ENCODE measurements at regions of chr15 and their contacts with region 1.

Region 1: DNA sequence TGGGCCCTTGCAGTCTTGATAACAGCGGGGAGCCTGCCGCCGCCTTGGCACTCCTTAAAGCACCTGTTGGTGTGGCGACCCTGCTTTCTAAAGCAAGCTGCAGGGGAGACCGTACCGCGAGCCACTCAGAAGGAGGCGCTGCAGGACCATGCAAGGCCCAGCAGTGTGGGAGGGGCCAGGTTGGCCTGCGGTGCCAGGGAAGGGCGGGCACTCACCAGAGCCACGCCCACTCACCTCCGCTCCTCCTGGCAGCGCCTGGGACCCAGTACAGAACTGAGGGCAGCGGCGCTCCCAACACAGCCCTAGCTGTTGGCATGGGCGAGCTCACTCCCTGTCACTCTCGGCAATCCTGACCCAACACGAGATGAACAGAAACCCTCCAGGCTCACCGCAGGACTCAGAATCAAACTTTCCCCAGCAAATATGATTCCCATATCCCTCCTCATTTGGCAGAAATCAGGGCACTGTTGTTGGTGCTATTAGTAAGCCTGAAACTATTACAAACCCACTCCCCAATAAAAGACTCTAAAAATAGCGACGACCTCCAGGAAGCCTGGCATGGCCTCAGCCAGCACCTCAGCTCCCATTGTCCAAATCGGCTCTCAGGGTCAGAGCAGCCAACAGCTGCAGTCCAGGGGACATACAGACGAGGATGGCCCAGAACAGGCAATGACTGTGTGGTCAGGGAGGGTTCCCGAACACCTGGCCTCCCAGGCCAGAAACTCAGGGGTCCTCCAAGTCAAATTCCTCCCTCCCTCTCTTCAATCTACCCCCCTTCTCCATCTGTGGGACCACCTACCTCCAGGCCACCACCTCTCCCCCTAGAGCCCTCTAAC is 77.2 kb downstream of the TBC1D2B start:
- DNase-seq: peak; percentile 60 to 83
- ATAC-seq: peak; percentile 3 to 15
- H3K4me3 ChIP-seq: no peak overlapping the region
- H3K27ac ChIP-seq: no peak overlapping the region
- H3K4me1 ChIP-seq: peaks cover 38 to 42% of the 10 kb centered on the region in 2 donors
- H3K27me3 ChIP-seq: no peaks in the 10 kb centered on the region
- CTCF ChIP-seq: peak; percentile 69 to 89 (median 77)
- POLR2A ChIP-seq: no peak

Region 2: DNA sequence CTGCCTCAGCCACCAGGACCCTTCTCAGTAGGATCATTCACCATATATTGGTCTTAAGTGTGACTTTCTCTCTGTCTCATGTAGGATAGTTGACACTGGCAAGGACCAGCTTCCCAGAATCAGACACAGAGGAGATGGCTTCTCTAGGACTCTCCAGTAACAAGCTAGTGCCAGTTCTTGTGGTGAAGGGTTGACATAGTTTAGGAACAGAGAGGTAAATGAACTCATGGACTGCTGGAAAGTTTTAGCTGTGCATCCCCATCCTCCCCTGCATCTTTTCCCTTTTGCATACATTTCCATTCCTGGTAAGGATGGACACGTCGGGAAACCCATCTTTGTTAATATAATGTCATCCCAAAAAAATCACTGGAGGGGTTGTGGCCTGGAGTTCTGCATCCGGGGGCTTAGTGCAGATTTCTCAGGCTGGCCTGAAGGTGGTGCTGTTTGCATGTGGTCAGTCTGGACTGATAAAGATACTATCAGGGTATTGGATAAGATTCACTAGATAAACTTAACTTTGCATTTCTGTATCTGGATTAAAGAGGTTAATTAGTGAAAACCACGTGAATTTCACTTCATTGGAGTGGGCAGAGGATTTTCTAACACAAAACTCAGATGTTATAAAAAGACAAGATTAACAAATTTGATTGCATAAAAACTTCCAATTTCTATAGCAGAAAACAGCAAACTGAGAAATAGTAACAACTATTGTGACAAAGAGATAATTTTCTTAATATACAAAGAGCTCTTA is 33.6 kb before region 1 on chr15:
- in situ Hi-C with region 1: no loop called
- intact Hi-C with region 1: loop called (anchors 5 kb)
- DNase-seq: no peak
- ATAC-seq: peak; percentile 80 to 88
- H3K4me3 ChIP-seq: no peak overlapping the region
- H3K27ac ChIP-seq: no peak overlapping the region
- H3K4me1 ChIP-seq: peaks cover 0 to 6% of the 10 kb centered on the region in 2 donors
- H3K27me3 ChIP-seq: no peaks in the 10 kb centered on the region
- CTCF ChIP-seq: peak; percentile 72 to 90 (median 80)
- POLR2A ChIP-seq: no peak

Region 3: DNA sequence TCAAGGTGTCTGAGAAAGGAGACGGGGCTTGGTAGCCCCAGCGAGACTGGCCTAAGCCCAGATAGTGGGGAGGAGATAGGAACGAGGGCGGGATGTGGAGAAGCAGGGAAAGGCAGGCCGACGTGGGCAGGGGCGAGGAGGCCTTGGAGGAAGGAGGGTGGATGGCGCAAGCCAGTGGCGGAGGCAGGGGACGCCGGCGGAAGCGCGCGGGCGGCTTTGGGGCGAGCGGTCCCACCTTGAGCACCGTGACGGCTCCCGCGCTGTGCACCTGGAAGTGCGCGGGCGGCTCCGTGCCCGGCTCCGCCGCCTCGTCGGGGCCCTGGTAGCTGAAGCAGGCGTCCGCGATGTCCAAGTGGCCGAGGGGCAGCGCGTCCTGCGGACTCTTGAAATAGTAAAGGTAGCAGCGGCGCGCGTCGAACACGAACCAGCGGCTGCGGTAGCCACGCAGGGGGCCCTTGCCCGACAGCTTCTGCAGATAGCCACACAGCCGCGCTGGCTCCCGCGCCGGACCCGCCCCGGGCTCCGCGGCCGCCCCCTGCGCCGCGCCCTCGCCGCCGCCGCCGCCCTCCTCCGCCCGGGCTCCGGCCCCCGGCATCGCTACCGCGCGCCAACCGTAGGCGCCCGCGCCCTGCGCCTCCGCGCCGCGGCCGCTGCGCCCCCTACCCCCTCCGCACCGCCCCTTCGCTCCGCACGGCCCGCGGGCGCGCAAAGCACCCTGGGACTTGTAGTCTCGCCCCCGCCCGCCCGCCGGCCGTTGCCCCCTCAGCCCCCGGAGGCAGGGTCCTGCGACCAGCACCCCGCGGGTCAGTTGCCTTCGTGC is 77.0 kb after region 1 on chr15 and contains the start of gene TBC1D2B:
- in situ Hi-C with region 1: loop called in 1 of 4 experiments (anchors 10 kb)
- intact Hi-C with region 1: loop called (anchors 2 kb)
- DNase-seq: peak; percentile 41 to 44
- ATAC-seq: peak; percentile 75 to 79
- H3K4me3 ChIP-seq: peak within 1 kb of the TSS; percentile 80 to 89 (median 82)
- H3K27ac ChIP-seq: peak within 1 kb of the TSS; percentile 70 to 83 (median 79)
- H3K4me1 ChIP-seq: peaks cover 17 to 27% of the 10 kb centered on the region in 2 donors
- H3K27me3 ChIP-seq: no peaks in the 10 kb centered on the region
- CTCF ChIP-seq: peak in 1 of 5 experiments; percentile 18
- POLR2A ChIP-seq: peak; percentile 20 to 41
- total RNA-seq, gene TBC1D2B: 4.7 to 9.6 (median 8.1) TPM

Region 4: GRCh38 chr15:78093242-78094020 is 93.1 kb after region 1 on chr15:
- in situ Hi-C with region 1: loop called in 1 of 4 experiments (anchors 10 kb)
- intact Hi-C with region 1: loop called (anchors 5 kb)
- DNase-seq: peak; percentile 46 to 54
- ATAC-seq: peak; percentile 95 to 98
- H3K4me3 ChIP-seq: no peak overlapping the region
- H3K27ac ChIP-seq: peak overlapping the region in 3 of 4 donors; percentile 11 to 66 (median 56)
- H3K4me1 ChIP-seq: peaks cover 14 to 15% of the 10 kb centered on the region in 2 donors
- H3K27me3 ChIP-seq: no peaks in the 10 kb centered on the region
- CTCF ChIP-seq: no peak
- POLR2A ChIP-seq: no peak

Region 5: GRCh38 chr15:78264304-78265136 is 264.2 kb after region 1 on chr15 and contains the start of gene DNAJA4:
- in situ Hi-C with region 1: no loop called
- intact Hi-C with region 1: loop called (anchors 2 kb)
- DNase-seq: peak; percentile 27 to 72
- ATAC-seq: peak; percentile 25 to 30
- H3K4me3 ChIP-seq: peak within 1 kb of the TSS; percentile 73 to 86 (median 82)
- H3K27ac ChIP-seq: peak within 1 kb of the TSS; percentile 90 to 96 (median 94)
- H3K4me1 ChIP-seq: peaks cover 35 to 40% of the 10 kb centered on the region in 2 donors
- H3K27me3 ChIP-seq: no peaks in the 10 kb centered on the region
- CTCF ChIP-seq: peak in 2 of 5 experiments; percentile 24 to 27
- POLR2A ChIP-seq: peak; percentile 39 to 46
- total RNA-seq, gene DNAJA4: 13.7 to 120 (median 37.8) TPM